ENCODE measurements at regions of chr3 and their contacts with region 1.

Region 1: DNA sequence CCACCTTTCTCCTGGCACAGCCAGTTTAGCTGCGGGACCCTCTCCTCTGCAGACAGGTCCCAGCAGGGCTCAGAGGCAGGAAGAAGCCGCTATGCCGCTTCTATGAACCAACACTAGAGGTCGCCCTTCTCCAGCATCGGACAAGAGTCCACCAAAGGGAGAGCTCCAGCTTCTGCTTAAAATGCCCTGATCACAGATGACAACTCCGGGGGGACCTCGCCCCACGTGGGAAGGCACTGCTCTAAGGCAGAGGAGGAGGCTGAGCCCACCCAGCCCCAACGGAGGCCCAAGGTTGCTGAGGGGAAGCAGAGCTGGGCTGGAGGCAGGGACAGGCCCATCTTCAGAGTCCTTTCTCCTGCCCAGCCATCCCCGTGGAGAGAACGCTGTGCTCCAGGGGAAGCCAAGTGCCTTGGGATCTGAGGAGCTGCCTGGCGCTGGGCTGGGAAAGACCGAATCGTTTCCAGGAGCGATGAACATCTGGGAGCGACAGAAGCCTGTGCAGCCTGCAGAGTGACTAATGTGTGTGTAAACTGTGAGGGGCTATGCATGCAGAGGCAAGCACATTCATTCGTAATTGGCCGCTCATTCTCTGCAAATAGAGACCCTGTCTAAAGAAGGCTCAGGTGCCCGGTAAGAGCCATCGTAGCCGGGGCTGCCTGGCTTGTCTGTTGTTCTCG is 43.5 kb upstream of the BDH1 start:
- DNase-seq: peak; percentile 74
- H3K4me3 Mint-ChIP-seq: no peak overlapping the region
- H3K27ac Mint-ChIP-seq: peak overlapping the region; percentile 33
- H3K4me1 Mint-ChIP-seq: peaks cover 16% of the 10 kb centered on the region
- H3K27me3 Mint-ChIP-seq: no peaks in the 10 kb centered on the region

Region 2: DNA sequence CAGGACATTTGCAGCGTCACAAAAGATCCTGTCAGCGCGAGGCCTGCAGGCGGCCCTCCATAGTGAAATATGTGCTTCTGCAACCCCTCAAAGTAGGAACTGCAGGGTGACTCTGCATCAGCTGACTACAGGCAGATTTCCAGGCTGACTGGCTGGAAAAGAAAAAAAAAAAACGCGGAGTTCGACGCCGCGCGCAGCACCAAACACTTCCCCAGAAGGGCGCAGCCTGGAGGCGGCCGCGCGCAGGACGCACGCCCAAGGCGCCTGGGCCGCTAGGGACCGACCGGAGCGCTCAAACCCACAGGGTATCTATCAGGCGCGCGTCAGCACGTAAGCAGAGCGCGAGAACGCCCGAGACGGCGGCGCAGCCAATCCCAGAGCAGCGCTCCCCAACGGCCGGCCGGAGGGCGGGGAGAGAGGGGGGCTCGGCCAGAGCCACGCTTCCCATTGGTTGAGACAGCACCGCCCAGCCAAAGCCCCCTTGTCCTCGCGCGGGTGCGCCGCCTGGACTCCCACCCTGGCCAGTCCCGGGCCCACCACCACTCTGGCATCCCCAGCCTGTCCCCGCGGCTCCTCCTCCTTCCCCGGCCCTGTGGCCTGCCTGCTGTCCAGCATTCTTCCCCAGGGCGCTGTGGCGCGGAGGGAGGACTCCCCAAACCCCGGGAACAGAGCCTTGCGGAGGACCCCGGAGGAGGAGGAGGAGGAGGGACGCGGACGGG is 44.5 kb before region 1 on chr3:
- intact Hi-C with region 1: loop called (anchors 1 kb)
- DNase-seq: peak; percentile 93
- H3K4me3 Mint-ChIP-seq: peak overlapping the region; percentile 92
- H3K27ac Mint-ChIP-seq: peak overlapping the region; percentile 96
- H3K4me1 Mint-ChIP-seq: peaks cover 32% of the 10 kb centered on the region
- H3K27me3 Mint-ChIP-seq: peaks cover 13% of the 10 kb centered on the region

Region 3: GRCh38 chr3:197667978-197668377 is 68.8 kb after region 1 on chr3:
- intact Hi-C with region 1: loop called (anchors 2 kb)
- DNase-seq: no peak
- H3K4me3 Mint-ChIP-seq: no peak overlapping the region
- H3K27ac Mint-ChIP-seq: no peak overlapping the region
- H3K4me1 Mint-ChIP-seq: peaks cover 2% of the 10 kb centered on the region
- H3K27me3 Mint-ChIP-seq: no peaks in the 10 kb centered on the region

Region 4: GRCh38 chr3:197801891-197802778 is 202.9 kb after region 1 on chr3:
- intact Hi-C with region 1: loop called (anchors 10 kb)
- DNase-seq: no peak
- H3K4me3 Mint-ChIP-seq: no peak overlapping the region
- H3K27ac Mint-ChIP-seq: peak overlapping the region; percentile 23
- H3K4me1 Mint-ChIP-seq: peaks cover 38% of the 10 kb centered on the region
- H3K27me3 Mint-ChIP-seq: no peaks in the 10 kb centered on the region

Measured in activated T-helper 2 cell treated with anti-CD3 and anti-CD28 coated beads, Interferon-gamma antibody, Interleukin-2, Interleukin-4, amounts not matched to agents 10 μg/mL and 5 μg/mL and 100 μg/mL, durations not matched to agents 14 hours and 24 hours and 36 hours (primary cell).